HCT116 (cell line): ENCODE measurements at regions of chrX and their contacts with region 1.

Region 1: DNA sequence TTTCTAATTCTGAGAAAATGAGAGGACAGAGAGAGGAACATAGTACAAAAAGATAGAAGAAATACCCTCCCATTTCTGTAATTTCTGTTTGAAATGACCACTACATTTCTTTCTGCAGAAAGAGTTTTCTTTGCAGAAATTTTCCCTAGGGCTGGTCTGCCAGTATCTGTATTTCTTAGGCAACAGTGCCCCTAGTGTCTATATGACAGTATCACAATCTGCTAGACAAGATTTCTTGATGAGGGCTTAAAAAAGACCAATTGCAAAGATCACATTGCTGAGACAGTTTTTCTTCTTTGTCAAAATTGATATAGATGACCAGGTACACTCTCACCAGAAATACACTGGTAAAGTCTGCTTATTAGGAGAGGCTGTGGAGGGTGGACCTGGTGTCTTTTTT is 81.0 kb upstream of the ZDHHC15 start:
- DNase-seq: no peak
- ATAC-seq: no peak
- H3K4me3 ChIP-seq: no peak overlapping the region
- H3K27ac ChIP-seq: no peak overlapping the region
- H3K4me1 ChIP-seq: no peaks in the 10 kb centered on the region
- H3K27me3 ChIP-seq: no peaks in the 10 kb centered on the region
- CTCF ChIP-seq: peak in 2 of 3 experiments; percentile 17 to 51; a peak in 2 of 6 replicates
- POLR2A ChIP-seq: no peak
- RAD21 ChIP-seq: peak; percentile 51

Region 2: GRCh38 chrX:74550295-74550802 is 1053.5 kb before region 1 on chrX:
- CTCF ChIA-PET with region 1: no interaction called
- POLR2A ChIA-PET with region 1: no interaction called
- RAD21 ChIA-PET with region 1: no interaction called
- intact Hi-C with region 1: loop called (anchors 10 kb)
- DNase-seq: peak; percentile 51
- ATAC-seq: peak; percentile 93
- H3K4me3 ChIP-seq: no peak overlapping the region
- H3K27ac ChIP-seq: no peak overlapping the region
- H3K4me1 ChIP-seq: no peaks in the 10 kb centered on the region
- H3K27me3 ChIP-seq: no peaks in the 10 kb centered on the region
- CTCF ChIP-seq: peak; percentile 86 to 99 (median 91)
- POLR2A ChIP-seq: no peak
- RAD21 ChIP-seq: peak; percentile 90

Region 3: GRCh38 chrX:75038925-75039324 is 564.9 kb before region 1 on chrX:
- CTCF ChIA-PET with region 1: no interaction called
- POLR2A ChIA-PET with region 1: no interaction called
- RAD21 ChIA-PET with region 1: no interaction called
- intact Hi-C with region 1: loop called (anchors 2 kb)
- DNase-seq: peak; percentile 8
- ATAC-seq: peak; percentile 60; the same call in 1 of the 2 replicates
- H3K4me3 ChIP-seq: no peak overlapping the region
- H3K27ac ChIP-seq: no peak overlapping the region
- H3K4me1 ChIP-seq: no peaks in the 10 kb centered on the region
- H3K27me3 ChIP-seq: no peaks in the 10 kb centered on the region
- CTCF ChIP-seq: peak; percentile 6 to 48 (median 44); a peak in 4 of 6 replicates
- POLR2A ChIP-seq: no peak
- RAD21 ChIP-seq: peak; percentile 55

Region 4: DNA sequence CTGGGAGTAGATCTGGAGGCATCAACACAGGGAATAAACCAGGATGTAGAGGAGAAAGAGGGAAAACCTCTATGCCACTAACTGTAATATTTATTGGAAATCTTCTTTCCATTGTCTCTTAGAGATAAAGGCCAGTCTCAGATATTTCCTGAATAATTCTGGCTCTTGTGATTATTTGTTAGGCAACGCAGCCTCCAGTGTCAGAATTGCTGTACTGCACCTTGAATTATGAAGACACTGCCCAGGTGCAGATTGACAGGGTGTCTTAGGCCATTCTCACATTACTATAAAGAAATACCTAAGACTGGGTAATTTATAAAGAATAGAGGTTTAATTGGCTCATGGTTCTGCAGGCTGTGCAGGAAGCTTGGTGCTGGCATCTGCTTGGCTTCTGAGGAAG is 19.7 kb after region 1 on chrX:
- CTCF ChIA-PET with region 1: no interaction called
- POLR2A ChIA-PET with region 1: no interaction called
- RAD21 ChIA-PET with region 1: no interaction called
- intact Hi-C with region 1: no loop called
- DNase-seq: no peak
- ATAC-seq: no peak
- H3K4me3 ChIP-seq: no peak overlapping the region
- H3K27ac ChIP-seq: no peak overlapping the region
- H3K4me1 ChIP-seq: no peaks in the 10 kb centered on the region
- H3K27me3 ChIP-seq: no peaks in the 10 kb centered on the region
- CTCF ChIP-seq: peak in 2 of 3 experiments; percentile 3 to 19; a peak in 1 of 6 replicates
- POLR2A ChIP-seq: no peak
- RAD21 ChIP-seq: peak; percentile 4; the same call in 1 of the 2 replicates

Region 5: GRCh38 chrX:75748431-75748830 is 144.6 kb after region 1 on chrX:
- CTCF ChIA-PET with region 1: no interaction called
- POLR2A ChIA-PET with region 1: no interaction called
- RAD21 ChIA-PET with region 1: no interaction called
- intact Hi-C with region 1: no loop called
- DNase-seq: no peak
- ATAC-seq: no peak
- H3K4me3 ChIP-seq: no peak overlapping the region
- H3K27ac ChIP-seq: no peak overlapping the region
- H3K4me1 ChIP-seq: no peaks in the 10 kb centered on the region
- H3K27me3 ChIP-seq: no peaks in the 10 kb centered on the region
- CTCF ChIP-seq: no peak
- POLR2A ChIP-seq: no peak
- RAD21 ChIP-seq: no peak